Panc1 (cell line): ENCODE measurements at regions of chr15 and their contacts with region 1.

Region 1: GRCh38 chr15:92808978-92809879 is 90.9 kb upstream of the CHD2 start:
- DNase-seq: no peak
- ATAC-seq: peak; percentile 83
- H3K4me3 ChIP-seq: peak overlapping the region; percentile 44 to 69
- H3K27ac ChIP-seq: peak overlapping the region; percentile 100
- H3K4me1 ChIP-seq: peaks cover 54% of the 10 kb centered on the region
- H3K27me3 ChIP-seq: no peaks in the 10 kb centered on the region
- CTCF ChIP-seq: peak; percentile 99

Region 2: DNA sequence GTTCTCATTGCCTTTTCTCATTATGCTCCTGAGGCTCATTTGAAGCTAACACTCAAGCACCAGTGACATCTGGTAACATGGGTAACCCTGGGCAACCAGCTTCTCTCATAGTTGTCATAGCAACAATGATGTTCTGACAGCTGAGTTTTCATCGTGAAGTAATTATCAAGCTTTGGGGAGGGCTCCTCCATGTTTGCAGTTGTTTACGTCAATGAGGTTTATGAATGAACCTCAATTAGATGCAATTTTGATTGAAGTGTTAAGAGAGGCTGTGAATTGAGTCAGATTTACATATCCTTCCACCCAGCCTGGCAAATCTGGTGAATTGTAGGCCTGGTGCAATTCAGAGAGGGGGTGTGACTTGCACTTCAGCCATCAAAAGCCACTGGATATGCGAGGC is 28.4 kb before region 1 on chr15:
- CTCF ChIA-PET with region 1: no interaction called
- POLR2A ChIA-PET with region 1: no interaction called
- in situ Hi-C with region 1: no loop called
- intact Hi-C with region 1: no loop called
- DNase-seq: no peak
- ATAC-seq: no peak
- H3K4me3 ChIP-seq: no peak overlapping the region
- H3K27ac ChIP-seq: no peak overlapping the region
- H3K4me1 ChIP-seq: no peaks in the 10 kb centered on the region
- H3K27me3 ChIP-seq: no peaks in the 10 kb centered on the region
- CTCF ChIP-seq: no peak

Region 3: GRCh38 chr15:92820236-92821021 is 11.2 kb after region 1 on chr15:
- CTCF ChIA-PET with region 1: interaction called, 3 read pairs
- POLR2A ChIA-PET with region 1: interaction called, 15 read pairs
- in situ Hi-C with region 1: no loop called
- intact Hi-C with region 1: no loop called
- DNase-seq: no peak
- ATAC-seq: peak; percentile 88
- H3K4me3 ChIP-seq: peak overlapping the region; percentile 33 to 48
- H3K27ac ChIP-seq: peak overlapping the region; percentile 100
- H3K4me1 ChIP-seq: peaks cover 73% of the 10 kb centered on the region
- H3K27me3 ChIP-seq: no peaks in the 10 kb centered on the region
- CTCF ChIP-seq: no peak

Region 4: DNA sequence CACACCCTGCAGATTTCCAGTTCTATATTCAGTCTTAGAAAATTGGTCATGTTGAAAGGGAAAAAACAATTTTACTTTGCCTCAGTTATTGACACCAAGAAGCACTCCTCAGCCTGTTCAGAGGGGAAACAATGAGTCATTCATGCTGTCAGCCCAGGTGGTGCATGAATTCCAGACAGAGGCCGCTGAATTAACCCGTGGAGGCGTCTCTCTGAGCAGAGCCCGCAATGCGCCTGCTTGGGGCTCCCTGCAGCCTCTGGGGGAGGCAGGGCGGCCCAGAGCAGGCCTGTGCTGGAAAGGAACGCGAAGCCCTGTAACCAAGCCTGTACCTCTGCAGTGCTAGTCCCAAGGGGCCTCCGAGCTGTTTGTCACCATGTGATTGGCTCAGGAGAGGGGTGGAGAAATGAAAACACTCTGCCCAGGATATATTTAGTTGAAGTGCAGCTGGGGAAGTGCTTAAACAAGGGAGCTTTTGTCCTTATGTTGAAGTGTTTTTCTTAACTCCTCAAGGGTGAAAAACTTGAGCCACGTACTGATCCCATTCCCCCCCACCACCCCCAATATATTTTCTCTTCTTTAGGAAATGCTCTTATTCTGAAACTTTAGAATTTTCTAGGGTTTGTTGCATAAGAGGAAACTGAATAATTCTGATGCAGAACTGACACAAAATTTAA is 22.6 kb after region 1 on chr15:
- CTCF ChIA-PET with region 1: interaction called, 10 read pairs
- POLR2A ChIA-PET with region 1: interaction called, 6 read pairs
- in situ Hi-C with region 1: no loop called
- intact Hi-C with region 1: no loop called
- DNase-seq: peak; percentile 77
- ATAC-seq: peak; percentile 99
- H3K4me3 ChIP-seq: peak overlapping the region; percentile 28
- H3K27ac ChIP-seq: peak overlapping the region; percentile 99
- H3K4me1 ChIP-seq: peaks cover 42% of the 10 kb centered on the region
- H3K27me3 ChIP-seq: no peaks in the 10 kb centered on the region
- CTCF ChIP-seq: no peak

Region 5: DNA sequence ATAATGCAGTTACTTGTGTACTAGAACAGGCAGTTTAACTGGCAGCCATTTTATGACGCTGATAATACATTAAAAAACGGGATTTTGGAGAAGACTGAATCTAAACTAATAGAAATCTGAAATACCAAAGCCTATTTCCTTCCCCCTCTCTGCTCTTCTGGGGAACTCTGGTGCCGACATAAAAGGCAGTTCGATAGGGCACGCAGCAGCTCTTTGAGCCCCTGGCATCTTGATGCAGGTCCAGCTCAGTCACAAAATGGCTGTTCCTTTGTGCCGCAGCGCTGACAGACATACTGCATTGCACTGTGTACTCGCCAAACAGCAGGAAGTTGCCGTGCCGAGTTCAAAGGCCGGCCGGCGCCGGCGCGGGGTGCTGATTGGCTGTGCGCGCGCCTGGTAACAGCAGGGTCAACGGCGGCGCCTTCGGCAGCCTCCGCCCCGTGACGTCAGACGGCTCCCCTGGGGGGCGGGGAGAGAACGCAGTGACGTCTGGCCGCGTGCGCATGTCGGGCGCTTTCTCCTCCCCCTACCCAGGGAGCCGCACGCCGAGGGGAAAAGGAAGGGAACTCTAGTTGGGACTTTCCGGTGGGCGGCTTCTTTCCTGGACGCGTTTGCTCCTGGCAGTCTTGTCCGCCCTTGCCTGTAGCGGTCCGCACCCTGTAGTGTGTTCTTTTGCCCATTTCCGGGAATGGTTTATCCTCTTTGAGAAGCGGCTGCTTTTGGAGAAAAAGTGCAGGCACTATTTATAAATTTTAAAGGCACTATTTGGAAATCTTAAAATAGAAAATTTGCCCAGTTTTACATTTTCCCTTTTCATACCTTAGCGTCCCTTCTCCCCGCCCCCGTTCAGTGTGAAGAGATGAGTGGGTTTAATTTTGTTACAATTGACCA is 95.0 kb after region 1 on chr15:
- CTCF ChIA-PET with region 1: interaction called, 6 read pairs
- POLR2A ChIA-PET with region 1: interaction called, 10 read pairs
- in situ Hi-C with region 1: no loop called
- intact Hi-C with region 1: loop called (anchors 1 kb)
- DNase-seq: peak; percentile 91
- ATAC-seq: peak; percentile 91
- H3K4me3 ChIP-seq: peak overlapping the region; percentile 68 to 71
- H3K27ac ChIP-seq: peak overlapping the region; percentile 100
- H3K4me1 ChIP-seq: peaks cover 53% of the 10 kb centered on the region
- H3K27me3 ChIP-seq: no peaks in the 10 kb centered on the region
- CTCF ChIP-seq: no peak

Region 6: DNA sequence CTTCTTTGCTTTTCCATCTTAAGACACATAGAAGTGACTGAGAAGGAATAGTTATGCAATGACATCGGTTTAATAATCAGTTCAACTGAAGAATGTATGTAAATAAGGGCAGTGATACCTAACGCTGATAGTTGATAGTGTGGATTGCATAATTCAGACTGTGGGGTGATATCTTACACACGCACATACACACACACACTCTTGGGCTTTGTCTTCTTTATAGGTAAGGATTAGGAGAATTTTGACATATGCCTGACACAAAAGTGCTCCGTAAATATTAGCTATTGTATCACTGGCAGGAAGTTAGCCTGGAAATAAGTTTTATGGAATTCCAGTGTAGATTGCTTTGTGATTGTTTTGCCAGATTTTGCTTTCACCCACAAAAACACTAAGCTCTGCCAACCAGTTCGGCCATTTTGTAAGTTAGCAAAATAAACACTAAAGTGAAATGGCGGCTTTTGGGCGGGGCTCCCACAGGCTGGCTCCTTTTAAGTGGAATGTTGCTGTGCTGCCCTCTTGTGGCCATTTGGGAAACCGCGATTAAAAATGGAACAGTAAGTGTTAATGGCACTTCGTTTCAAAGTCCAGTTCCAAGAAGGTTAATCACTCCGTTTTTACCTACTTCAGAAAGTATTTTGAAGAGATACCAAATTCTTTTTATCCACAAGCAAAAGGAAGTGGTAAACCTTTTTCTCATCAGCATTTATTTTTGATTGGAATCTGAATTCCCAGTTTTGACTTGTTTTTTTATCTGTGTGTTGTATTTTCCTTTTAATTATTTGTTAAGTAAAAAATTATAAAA is 108.6 kb after region 1 on chr15:
- CTCF ChIA-PET with region 1: interaction called, 6 read pairs
- POLR2A ChIA-PET with region 1: interaction called, 7 read pairs
- in situ Hi-C with region 1: no loop called
- intact Hi-C with region 1: loop called (anchors 5 kb)
- DNase-seq: no peak
- ATAC-seq: peak; percentile 70
- H3K4me3 ChIP-seq: peak overlapping the region; percentile 15 to 40; a peak in 3 of 4 replicates
- H3K27ac ChIP-seq: peak overlapping the region; percentile 97
- H3K4me1 ChIP-seq: peaks cover 95% of the 10 kb centered on the region
- H3K27me3 ChIP-seq: no peaks in the 10 kb centered on the region
- CTCF ChIP-seq: peak; percentile 95